Activated CD4-positive, alpha-beta T cell treated with anti-CD3 and anti-CD28 coated beads for 36 hours (primary cell): ENCODE measurements at regions of chr2 and their contacts with region 1.

Region 1: DNA sequence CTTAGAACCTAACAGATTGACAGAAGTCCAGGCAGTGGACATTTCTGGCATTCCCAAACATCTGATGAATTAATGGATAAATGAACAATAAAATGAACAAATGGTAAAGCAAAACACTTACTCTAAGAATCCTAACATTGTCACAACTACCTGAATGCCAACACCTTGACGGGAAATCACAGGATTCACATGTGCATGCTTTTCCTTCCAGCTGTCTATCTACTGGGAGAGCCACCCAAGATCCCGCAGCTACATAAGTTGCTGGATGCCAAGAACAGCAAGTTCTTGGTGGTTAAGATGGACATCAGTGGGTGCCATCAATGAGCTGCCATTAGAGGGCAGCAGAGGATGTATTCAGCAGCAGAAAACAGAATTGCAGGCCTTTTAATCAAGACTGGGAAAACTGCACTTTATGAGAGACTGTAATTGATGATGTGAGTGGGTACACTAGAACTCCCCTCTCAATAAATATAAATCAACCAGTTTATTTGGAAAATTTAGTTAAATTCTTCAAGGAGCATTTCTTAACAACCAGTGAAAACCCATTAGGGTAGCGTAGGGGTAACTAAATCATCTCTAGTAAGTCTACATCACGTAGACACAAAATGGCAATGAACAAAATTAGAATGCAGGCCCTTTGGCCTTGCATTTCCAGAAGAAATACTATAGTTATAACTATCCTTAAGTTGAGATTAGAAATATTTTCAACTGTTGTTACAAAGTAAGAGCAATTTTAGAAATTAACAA is 45.6 kb downstream of the SESTD1 start:
- DNase-seq: peak; percentile 72
- ATAC-seq: peak; percentile 69
- H3K4me3 Mint-ChIP-seq: no peak overlapping the region
- H3K27ac Mint-ChIP-seq: no peak overlapping the region
- H3K4me1 Mint-ChIP-seq: no peaks in the 10 kb centered on the region
- H3K27me3 Mint-ChIP-seq: no peaks in the 10 kb centered on the region

Region 2: GRCh38 chr2:179071810-179072355 is 147.1 kb before region 1 on chr2:
- CTCF ChIA-PET with region 1: no interaction called
- POLR2A ChIA-PET with region 1: no interaction called
- intact Hi-C with region 1: no loop called
- DNase-seq: no peak
- ATAC-seq: no peak
- H3K4me3 Mint-ChIP-seq: no peak overlapping the region
- H3K27ac Mint-ChIP-seq: no peak overlapping the region
- H3K4me1 Mint-ChIP-seq: peaks cover 5% of the 10 kb centered on the region
- H3K27me3 Mint-ChIP-seq: no peaks in the 10 kb centered on the region

Region 3: DNA sequence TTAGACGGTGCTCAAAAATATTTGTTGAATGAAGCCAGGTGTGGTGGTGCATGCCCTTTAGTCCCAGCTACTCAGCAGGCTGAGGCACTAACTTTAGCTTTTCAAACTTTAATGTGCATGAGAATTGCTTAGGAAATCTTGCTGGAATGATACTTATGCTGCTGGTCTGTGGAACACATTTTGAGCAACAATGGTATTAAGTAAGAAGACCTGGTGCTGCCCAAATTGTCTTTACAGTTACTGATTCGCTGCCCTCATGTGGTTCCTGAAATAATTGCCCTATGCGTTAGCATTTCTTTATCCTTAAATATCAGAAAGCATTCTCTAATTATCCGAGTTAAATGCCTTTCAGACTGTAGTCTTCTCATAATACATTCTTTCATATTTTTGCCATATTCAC is 121.6 kb after region 1 on chr2:
- CTCF ChIA-PET with region 1: interaction called, 3 read pairs
- POLR2A ChIA-PET with region 1: no interaction called
- intact Hi-C with region 1: loop called (anchors 1 to 2 kb)
- DNase-seq: peak; percentile 9
- ATAC-seq: no peak
- H3K4me3 Mint-ChIP-seq: no peak overlapping the region
- H3K27ac Mint-ChIP-seq: no peak overlapping the region
- H3K4me1 Mint-ChIP-seq: no peaks in the 10 kb centered on the region
- H3K27me3 Mint-ChIP-seq: peaks cover 2% of the 10 kb centered on the region

Region 4: GRCh38 chr2:179410552-179411356 is 191.7 kb after region 1 on chr2:
- CTCF ChIA-PET with region 1: interaction called, 4 read pairs
- POLR2A ChIA-PET with region 1: no interaction called
- intact Hi-C with region 1: loop called in 1 of 2 experiments (anchors 1 kb)
- DNase-seq: peak; percentile 43
- ATAC-seq: peak; percentile 47
- H3K4me3 Mint-ChIP-seq: no peak overlapping the region
- H3K27ac Mint-ChIP-seq: no peak overlapping the region
- H3K4me1 Mint-ChIP-seq: no peaks in the 10 kb centered on the region
- H3K27me3 Mint-ChIP-seq: peaks cover 26% of the 10 kb centered on the region

Region 5: DNA sequence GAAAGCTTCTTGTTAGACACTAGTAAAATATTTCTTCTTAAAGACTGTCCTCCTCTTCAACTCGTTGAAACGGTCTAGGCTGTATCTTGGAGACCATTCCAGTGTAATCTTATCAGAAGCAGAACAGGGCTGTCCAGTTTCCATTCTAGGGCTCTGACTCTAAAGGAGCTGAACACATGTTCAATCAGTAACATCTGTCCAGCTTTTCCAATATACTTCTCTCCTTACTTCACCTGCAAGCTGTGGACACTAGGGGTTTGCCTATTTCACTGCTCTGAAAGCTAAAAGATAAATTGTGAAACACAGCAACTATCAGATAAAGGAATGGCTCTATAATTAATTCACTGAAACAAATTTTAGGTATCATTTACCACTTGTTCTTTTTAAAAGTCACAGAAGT is 568.6 kb after region 1 on chr2:
- CTCF ChIA-PET with region 1: no interaction called
- POLR2A ChIA-PET with region 1: no interaction called
- intact Hi-C with region 1: no loop called
- DNase-seq: no peak
- ATAC-seq: no peak
- H3K4me3 Mint-ChIP-seq: no peak overlapping the region
- H3K27ac Mint-ChIP-seq: no peak overlapping the region
- H3K4me1 Mint-ChIP-seq: no peaks in the 10 kb centered on the region
- H3K27me3 Mint-ChIP-seq: no peaks in the 10 kb centered on the region